ENCODE measurements at regions of chr9 and their contacts with region 1.

Region 1: DNA sequence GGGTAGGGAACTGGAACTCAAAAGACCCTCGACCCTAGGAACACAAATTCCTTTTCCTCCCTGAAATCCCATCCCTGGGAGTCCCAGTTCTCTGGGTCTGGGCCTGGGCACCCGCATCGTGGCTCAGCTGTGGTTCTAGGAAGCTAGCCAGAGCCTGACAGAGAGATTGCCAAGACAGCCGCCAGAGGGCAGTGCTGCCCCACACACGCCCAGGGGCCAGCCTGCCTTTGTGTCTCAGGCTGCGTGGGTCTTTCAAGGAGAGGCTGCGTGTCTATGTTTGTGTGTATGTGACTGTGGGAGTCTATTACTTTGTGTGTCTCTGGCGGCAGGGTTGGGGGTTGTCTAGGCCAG is 32.0 kb upstream of the TTLL11 start:
- DNase-seq: peak; percentile 88
- ATAC-seq: peak; percentile 80
- H3K4me3 Mint-ChIP-seq: no peak overlapping the region
- H3K27ac Mint-ChIP-seq: no peak overlapping the region
- H3K4me1 Mint-ChIP-seq: peaks cover 13% of the 10 kb centered on the region
- H3K27me3 Mint-ChIP-seq: peaks cover 23% of the 10 kb centered on the region

Region 2: DNA sequence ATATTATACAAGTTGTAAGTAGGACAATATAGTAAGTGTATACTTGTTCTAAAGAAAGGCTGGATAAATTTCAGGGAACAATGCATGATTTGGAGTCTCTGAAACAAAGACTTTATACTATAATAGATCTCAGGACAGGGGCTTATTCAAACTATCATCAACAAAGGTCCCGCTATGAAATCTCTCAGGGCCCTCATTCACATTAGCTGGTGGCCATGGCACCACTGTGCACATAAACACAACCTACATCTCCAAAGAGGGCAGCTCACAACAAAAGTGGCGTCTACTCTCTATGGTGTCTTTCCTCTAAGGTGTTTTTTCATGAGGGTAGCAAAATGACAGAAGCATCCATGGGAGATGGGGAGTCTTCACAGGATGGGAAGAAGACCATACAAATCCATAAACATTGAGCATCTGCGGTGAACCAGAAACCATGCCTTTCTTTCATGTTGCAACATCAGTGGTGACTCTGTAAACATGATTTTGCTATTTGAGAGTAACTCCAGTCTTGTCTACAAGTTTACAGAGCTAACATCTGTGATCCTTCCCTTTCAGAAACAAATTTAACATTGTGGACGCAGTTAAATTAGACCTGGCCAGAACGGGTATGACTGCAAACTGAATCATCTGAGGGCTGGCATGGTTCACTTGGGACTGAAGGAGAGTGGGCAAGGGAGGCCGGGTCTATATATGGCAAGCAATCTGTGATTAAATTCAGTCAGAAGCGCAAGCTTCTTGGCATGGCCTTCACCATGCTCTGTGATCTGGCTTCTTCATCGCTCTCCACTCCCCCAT is 37.5 kb before region 1 on chr9:
- CTCF ChIA-PET with region 1: interaction called, 15 read pairs
- POLR2A ChIA-PET with region 1: no interaction called
- intact Hi-C with region 1: no loop called
- DNase-seq: no peak
- ATAC-seq: no peak
- H3K4me3 Mint-ChIP-seq: no peak overlapping the region
- H3K27ac Mint-ChIP-seq: no peak overlapping the region
- H3K4me1 Mint-ChIP-seq: peaks cover 26% of the 10 kb centered on the region
- H3K27me3 Mint-ChIP-seq: no peaks in the 10 kb centered on the region

Region 3: GRCh38 chr9:122107291-122107805 is 17.8 kb before region 1 on chr9:
- CTCF ChIA-PET with region 1: interaction called, 11 read pairs
- POLR2A ChIA-PET with region 1: no interaction called
- intact Hi-C with region 1: no loop called
- DNase-seq: no peak
- ATAC-seq: no peak
- H3K4me3 Mint-ChIP-seq: no peak overlapping the region
- H3K27ac Mint-ChIP-seq: no peak overlapping the region
- H3K4me1 Mint-ChIP-seq: no peaks in the 10 kb centered on the region
- H3K27me3 Mint-ChIP-seq: no peaks in the 10 kb centered on the region

Region 4: DNA sequence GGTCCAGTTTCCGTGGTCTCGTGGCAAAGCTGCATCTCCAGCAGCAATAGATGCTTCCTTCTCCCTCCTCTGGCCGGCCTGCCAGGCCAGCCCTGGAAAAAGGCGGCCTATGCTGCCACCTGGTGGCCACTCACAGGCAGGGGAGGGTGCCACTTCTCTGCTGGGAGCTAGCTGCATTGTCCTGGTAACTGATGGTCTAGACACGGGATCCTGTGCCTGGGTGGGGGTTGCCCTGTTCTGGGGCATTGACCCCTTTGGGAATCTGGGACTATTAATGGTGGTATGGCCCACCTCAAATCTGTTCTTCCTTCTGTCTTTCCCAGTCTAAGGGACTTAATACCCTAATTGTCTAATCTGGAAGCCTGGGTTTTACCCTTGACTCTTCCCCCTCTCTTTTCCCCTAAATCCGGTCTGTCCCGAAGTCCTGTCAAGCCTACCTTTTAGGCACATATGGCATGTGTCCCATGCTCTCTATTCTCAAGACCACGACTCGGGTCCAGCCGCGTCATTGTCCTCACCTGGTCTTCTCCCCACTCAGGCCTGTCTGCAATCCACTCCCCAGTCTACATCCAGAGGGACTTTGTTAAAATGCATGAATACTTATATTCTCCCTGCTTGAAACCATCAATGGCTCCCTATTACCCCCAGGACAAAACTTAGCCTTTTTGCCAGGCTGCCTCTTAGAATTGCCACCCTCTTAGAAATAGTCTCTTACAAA is 225.7 kb after region 1 on chr9:
- CTCF ChIA-PET with region 1: interaction called, 168 read pairs
- POLR2A ChIA-PET with region 1: no interaction called
- intact Hi-C with region 1: loop called (anchors 1 kb)
- DNase-seq: peak; percentile 89
- ATAC-seq: peak; percentile 90
- H3K4me3 Mint-ChIP-seq: no peak overlapping the region
- H3K27ac Mint-ChIP-seq: no peak overlapping the region
- H3K4me1 Mint-ChIP-seq: peaks cover 7% of the 10 kb centered on the region
- H3K27me3 Mint-ChIP-seq: peaks cover 26% of the 10 kb centered on the region